ENCODE measurements at regions of chr5 and their contacts with region 1.

Region 1: DNA sequence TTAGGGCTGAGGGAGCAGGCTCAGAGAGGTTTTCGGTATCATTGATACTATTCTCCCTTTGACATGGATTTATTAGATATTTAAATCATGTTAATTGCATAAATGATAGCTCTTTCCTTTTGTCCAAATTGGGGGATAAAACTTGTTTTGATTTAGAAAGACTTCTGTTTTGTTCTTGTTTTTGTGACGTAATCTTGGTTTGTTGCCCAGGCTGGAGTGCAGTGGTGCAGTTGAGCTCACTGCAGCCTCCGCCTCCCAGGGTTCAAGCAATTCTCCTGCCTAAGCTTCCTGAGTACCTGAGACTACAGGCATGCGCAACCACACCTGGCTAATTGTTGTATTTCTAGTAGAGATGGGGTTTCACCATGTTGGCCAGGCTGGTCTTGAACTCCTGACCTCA is 7.1 kb downstream of the MAT2B start:
- DNase-seq: no peak
- CTCF ChIP-seq: no peak

Region 2: GRCh38 chr5:163525096-163525495 is 12.6 kb after region 1 on chr5:
- CTCF ChIA-PET with region 1: interaction called, 10 read pairs
- POLR2A ChIA-PET with region 1: no interaction called
- DNase-seq: no peak
- CTCF ChIP-seq: no peak

Region 3: DNA sequence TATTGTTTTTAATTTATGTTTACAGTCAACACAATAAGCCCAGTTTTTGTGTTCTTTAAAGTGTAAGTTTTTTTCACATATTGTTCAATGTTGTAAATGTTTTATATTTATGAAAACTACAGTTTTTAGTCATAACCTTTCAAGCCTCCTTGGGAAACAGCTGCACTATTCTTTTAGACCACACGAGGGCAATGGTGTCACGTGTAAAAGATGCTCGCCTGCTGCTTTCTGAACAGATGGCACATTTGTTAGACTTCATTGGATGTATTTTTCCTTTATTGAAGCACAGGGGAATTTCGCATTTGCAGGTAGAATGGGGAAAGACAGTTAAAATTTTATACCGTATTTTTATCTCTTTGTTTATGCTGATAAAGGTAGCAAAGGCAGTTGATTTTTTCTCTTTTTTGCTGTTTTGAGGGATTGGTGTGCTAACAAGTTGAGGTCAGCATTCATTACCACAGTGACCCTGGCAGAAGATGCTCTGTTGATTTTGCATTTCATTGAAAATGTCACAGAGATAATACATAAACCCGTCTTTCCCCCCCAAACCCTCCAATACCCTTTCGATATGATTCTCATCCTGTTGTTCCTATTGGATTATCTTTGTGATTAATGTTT is 51.9 kb after region 1 on chr5:
- CTCF ChIA-PET with region 1: no interaction called
- POLR2A ChIA-PET with region 1: no interaction called
- DNase-seq: peak; percentile 55
- CTCF ChIP-seq: peak; percentile 88